CD8-positive, alpha-beta memory T cell (primary cell): ENCODE measurements at regions of chr1 and their contacts with region 1.

Region 1: DNA sequence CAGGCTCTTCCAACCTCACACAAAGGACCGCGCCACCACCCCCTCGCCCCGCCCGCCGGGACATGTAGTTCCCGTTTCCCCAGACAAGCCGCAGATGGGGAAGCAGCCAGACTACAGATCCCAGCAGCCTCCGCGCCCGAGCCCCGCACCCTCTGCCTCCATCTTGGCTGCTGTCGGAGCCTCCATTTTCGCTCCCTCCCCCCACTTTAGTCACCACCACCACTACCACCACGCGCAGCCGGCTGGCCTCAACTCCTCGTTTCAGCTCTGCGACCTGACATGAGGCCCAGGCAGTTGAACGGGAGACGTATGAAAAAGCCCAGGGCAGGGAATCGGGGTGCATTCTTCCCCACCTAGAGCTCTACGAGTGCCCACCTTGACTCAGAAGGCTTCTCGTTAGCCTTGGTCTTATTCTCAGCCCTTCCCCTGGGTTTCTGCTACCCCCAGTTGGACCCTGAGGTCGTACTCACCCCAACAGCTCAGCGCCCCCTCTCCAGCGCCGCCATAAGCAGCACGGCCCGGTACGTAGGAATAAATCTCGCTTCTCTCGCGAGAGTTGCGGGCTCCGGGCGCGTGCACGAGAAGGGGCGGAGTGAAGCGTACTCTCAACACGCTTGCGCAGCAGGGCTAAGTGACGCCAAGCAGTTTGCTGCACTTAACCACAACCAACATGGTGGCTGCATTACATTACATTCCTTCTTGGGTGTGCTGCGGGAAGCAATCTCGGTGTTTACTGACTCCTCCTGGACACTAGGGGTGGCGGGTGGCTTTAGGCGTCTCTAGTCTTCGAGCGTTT is at the start of gene CSDE1:
- DNase-seq: peak; percentile 93 to 98 (median 96)
- H3K4me3 ChIP-seq: peak within 1 kb of the TSS; percentile 92
- H3K4me3 Mint-ChIP-seq: peak within 1 kb of the TSS; percentile 99 to 100 (median 100)
- H3K27ac ChIP-seq: peak within 1 kb of the TSS; percentile 99
- H3K27ac Mint-ChIP-seq: peak within 1 kb of the TSS; percentile 98 to 100 (median 100)
- H3K4me1 ChIP-seq: peaks cover 45% of the 10 kb centered on the region
- H3K4me1 Mint-ChIP-seq: peaks cover 52 to 63% (median 59%) of the 10 kb centered on the region in 3 donors
- H3K27me3 ChIP-seq: no peaks in the 10 kb centered on the region
- H3K27me3 Mint-ChIP-seq: no peaks in the 10 kb centered on the region
- total RNA-seq, gene CSDE1: 481 to 513 TPM

Region 2: GRCh38 chr1:114729782-114730181 is 27.9 kb before region 1 on chr1:
- CTCF ChIA-PET with region 1: no interaction called
- POLR2A ChIA-PET with region 1: no interaction called
- DNase-seq: no peak
- H3K4me3 ChIP-seq: no peak overlapping the region
- H3K4me3 Mint-ChIP-seq: no peak overlapping the region
- H3K27ac ChIP-seq: no peak overlapping the region
- H3K27ac Mint-ChIP-seq: peak overlapping the region in 5 of 8 donors; percentile 2 to 79 (median 60)
- H3K4me1 ChIP-seq: no peaks in the 10 kb centered on the region
- H3K4me1 Mint-ChIP-seq: peaks cover 11 to 16% (median 13%) of the 10 kb centered on the region in 3 donors
- H3K27me3 ChIP-seq: no peaks in the 10 kb centered on the region
- H3K27me3 Mint-ChIP-seq: no peaks in the 10 kb centered on the region

Region 3: DNA sequence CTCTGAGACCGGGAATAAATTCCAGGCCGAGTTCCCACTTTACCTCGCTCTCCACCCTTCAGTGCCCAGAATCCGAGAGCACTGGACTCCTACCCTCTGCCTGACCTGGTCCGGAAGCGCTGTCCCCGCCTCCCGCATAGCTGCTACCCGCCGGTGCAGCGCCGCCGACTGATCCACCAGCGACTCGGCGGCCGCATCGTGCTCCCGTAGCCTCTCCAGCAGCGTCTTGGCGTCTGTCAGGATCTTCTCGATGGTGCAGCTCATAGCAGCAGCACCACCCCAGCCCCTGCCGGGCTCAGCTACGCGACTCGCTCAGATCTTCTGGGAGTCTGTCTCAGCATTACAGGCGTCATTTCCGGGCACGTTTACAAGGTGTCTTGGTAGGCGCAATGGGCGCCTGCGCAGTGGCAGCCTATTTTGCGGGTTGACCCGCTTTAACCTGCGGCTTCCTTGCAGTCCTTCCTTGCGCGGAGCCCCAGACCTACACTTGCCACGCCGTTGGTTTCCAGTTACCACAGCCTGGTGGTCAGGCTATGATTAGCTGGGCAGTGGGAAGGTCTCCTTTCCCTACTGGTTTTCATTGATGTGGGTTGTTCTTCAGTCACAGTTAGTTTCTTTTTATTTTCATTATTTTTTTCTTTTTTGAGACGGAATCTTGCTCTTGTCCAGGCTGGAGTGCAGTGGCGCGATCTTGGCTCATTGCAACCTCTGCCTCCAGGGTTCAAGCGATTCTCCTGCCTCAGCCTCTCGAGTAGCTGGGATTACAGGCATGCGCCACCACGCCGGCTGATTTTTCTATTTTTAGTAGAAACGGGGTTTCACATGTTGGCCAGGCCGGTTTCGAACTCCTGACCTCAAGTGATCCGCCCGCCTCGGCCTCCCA is 22.9 kb after region 1 on chr1 and contains the start of gene SIKE1:
- CTCF ChIA-PET with region 1: interaction called, 5 read pairs
- POLR2A ChIA-PET with region 1: interaction called, 15 read pairs
- DNase-seq: peak; percentile 91 to 97 (median 95)
- H3K4me3 ChIP-seq: peak within 1 kb of the TSS; percentile 85
- H3K4me3 Mint-ChIP-seq: peak within 1 kb of the TSS; percentile 98 to 100 (median 99)
- H3K27ac ChIP-seq: peak within 1 kb of the TSS; percentile 90
- H3K27ac Mint-ChIP-seq: peak within 1 kb of the TSS; percentile 96 to 100 (median 99)
- H3K4me1 ChIP-seq: peaks cover 11% of the 10 kb centered on the region
- H3K4me1 Mint-ChIP-seq: peaks cover 28 to 41% (median 41%) of the 10 kb centered on the region in 3 donors
- H3K27me3 ChIP-seq: no peaks in the 10 kb centered on the region
- H3K27me3 Mint-ChIP-seq: peaks cover 0 to 4% of the 10 kb centered on the region in 2 donors
- total RNA-seq, gene SIKE1: 66.0 to 70.3 TPM